A673 (cell line): ENCODE measurements at regions of chr7 and their contacts with region 1.

Region 1: DNA sequence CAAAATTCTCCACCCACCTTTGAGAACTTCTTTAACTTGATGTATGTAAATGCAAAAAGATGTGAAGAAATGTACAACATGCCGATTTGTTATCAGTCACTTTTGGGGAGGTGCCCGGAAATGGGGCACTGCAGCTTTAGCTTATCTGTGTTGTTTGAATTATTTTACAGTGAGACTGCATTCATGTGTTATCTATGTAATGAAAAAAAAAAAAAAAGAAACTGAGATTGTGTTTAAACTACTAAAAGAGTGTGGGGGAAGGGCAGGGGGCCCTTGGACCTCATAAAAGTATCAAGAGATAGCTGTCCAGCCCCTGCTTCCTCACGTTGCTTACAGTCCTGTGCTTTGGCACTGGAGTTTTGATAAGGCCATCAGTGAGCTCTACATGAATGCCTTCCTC is 259.4 kb downstream of the STK31 start:
- DNase-seq: no peak
- H3K4me3 ChIP-seq: no peak overlapping the region
- H3K27ac ChIP-seq: no peak overlapping the region
- H3K4me1 ChIP-seq: no peaks in the 10 kb centered on the region
- H3K27me3 ChIP-seq: no peaks in the 10 kb centered on the region
- CTCF ChIP-seq: no peak

Region 2: GRCh38 chr7:23918856-23919255 is 50.6 kb before region 1 on chr7:
- CTCF ChIA-PET with region 1: no interaction called
- POLR2A ChIA-PET with region 1: no interaction called
- intact Hi-C with region 1: no loop called
- DNase-seq: no peak
- H3K4me3 ChIP-seq: no peak overlapping the region
- H3K27ac ChIP-seq: no peak overlapping the region
- H3K4me1 ChIP-seq: no peaks in the 10 kb centered on the region
- H3K27me3 ChIP-seq: no peaks in the 10 kb centered on the region
- CTCF ChIP-seq: no peak

Region 3: DNA sequence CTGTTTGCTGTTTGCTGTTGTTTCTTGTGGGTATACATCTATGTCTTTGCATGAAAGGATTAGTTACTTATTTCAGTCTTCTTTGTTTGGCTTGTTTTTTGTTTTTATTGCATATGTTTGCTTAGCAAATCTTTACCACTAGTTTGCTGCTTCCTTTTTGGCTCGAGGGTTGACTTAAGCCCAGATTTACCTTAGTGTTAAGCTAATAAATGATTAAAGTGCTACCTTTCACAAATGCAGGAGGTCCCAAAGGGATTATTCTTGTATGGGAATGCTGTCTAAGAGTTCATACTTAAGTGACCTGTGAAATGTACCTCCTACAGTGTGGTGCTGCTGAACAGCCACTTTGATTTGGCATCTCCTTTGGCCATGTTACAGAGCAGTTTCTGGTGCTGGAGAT is 41.1 kb after region 1 on chr7:
- CTCF ChIA-PET with region 1: no interaction called
- POLR2A ChIA-PET with region 1: interaction called, 10 read pairs
- intact Hi-C with region 1: no loop called
- DNase-seq: no peak
- H3K4me3 ChIP-seq: no peak overlapping the region
- H3K27ac ChIP-seq: no peak overlapping the region
- H3K4me1 ChIP-seq: no peaks in the 10 kb centered on the region
- H3K27me3 ChIP-seq: no peaks in the 10 kb centered on the region
- CTCF ChIP-seq: no peak

Region 4: GRCh38 chr7:24052572-24053223 is 83.3 kb after region 1 on chr7:
- CTCF ChIA-PET with region 1: no interaction called
- POLR2A ChIA-PET with region 1: no interaction called
- intact Hi-C with region 1: no loop called
- DNase-seq: peak; percentile 90
- H3K4me3 ChIP-seq: no peak overlapping the region
- H3K27ac ChIP-seq: peak overlapping the region; percentile 33
- H3K4me1 ChIP-seq: peaks cover 9% of the 10 kb centered on the region
- H3K27me3 ChIP-seq: no peaks in the 10 kb centered on the region
- CTCF ChIP-seq: no peak